Activated CD4-positive, alpha-beta memory T cell treated with anti-CD3 and anti-CD28 coated beads for 36 hours (primary cell): ENCODE measurements at regions of chr2 and their contacts with region 1.

Region 1: GRCh38 chr2:170361090-170361936 is 183.4 kb downstream of the MYO3B start:
- DNase-seq: peak; percentile 71
- H3K4me3 Mint-ChIP-seq: no peak overlapping the region
- H3K27ac Mint-ChIP-seq: no peak overlapping the region
- H3K4me1 Mint-ChIP-seq: peaks cover 25% of the 10 kb centered on the region
- H3K27me3 Mint-ChIP-seq: peaks cover 22% of the 10 kb centered on the region

Region 2: DNA sequence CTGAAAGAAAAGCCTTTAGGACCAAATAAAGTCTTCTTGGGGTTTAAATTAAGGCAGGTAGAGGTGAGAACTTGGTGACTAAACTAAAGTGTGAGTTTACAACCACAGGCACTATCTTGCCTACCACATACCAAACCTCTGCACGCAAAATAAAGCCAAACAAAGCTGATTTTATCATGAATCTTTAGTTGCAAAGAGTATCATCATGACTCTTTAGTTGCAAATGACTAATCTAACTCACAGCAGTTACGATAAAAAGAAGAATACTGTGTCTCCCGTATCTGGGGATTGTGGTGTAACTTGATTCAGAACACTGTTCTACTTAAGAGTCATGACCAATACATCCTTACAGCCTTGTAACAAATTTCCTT is 678.3 kb before region 1 on chr2:
- CTCF ChIA-PET with region 1: no interaction called
- POLR2A ChIA-PET with region 1: no interaction called
- intact Hi-C with region 1: loop called (anchors 10 kb)
- DNase-seq: peak; percentile 46
- H3K4me3 Mint-ChIP-seq: no peak overlapping the region
- H3K27ac Mint-ChIP-seq: peak overlapping the region; percentile 57
- H3K4me1 Mint-ChIP-seq: peaks cover 13% of the 10 kb centered on the region
- H3K27me3 Mint-ChIP-seq: no peaks in the 10 kb centered on the region

Region 3: GRCh38 chr2:170255971-170256370 is 105.3 kb before region 1 on chr2:
- CTCF ChIA-PET with region 1: no interaction called
- POLR2A ChIA-PET with region 1: no interaction called
- intact Hi-C with region 1: no loop called
- DNase-seq: no peak
- H3K4me3 Mint-ChIP-seq: no peak overlapping the region
- H3K27ac Mint-ChIP-seq: no peak overlapping the region
- H3K4me1 Mint-ChIP-seq: no peaks in the 10 kb centered on the region
- H3K27me3 Mint-ChIP-seq: peaks cover 16% of the 10 kb centered on the region

Region 4: DNA sequence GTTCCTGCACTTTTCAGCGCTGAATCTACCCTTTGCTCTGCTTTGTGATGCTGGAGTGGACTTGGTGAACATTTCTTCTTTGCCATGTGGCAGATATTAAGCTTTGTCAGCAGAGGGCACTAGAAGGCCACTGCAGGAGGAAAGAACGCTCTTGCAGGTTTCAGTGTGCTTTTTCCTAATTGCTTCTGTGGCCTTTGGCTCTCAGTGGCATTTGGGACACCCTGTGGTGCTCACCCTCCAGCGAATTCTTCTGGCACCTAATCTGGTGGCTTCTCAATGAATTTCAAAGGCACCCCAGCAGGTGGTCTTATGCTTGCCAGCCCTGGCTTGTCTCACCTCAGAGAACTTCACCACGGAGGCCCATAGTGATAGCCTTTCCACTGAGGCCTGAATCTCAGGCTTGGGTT is 36.7 kb before region 1 on chr2:
- CTCF ChIA-PET with region 1: interaction called, 23 read pairs
- POLR2A ChIA-PET with region 1: no interaction called
- intact Hi-C with region 1: no loop called
- DNase-seq: peak; percentile 41
- H3K4me3 Mint-ChIP-seq: no peak overlapping the region
- H3K27ac Mint-ChIP-seq: no peak overlapping the region
- H3K4me1 Mint-ChIP-seq: no peaks in the 10 kb centered on the region
- H3K27me3 Mint-ChIP-seq: peaks cover 7% of the 10 kb centered on the region

Region 5: DNA sequence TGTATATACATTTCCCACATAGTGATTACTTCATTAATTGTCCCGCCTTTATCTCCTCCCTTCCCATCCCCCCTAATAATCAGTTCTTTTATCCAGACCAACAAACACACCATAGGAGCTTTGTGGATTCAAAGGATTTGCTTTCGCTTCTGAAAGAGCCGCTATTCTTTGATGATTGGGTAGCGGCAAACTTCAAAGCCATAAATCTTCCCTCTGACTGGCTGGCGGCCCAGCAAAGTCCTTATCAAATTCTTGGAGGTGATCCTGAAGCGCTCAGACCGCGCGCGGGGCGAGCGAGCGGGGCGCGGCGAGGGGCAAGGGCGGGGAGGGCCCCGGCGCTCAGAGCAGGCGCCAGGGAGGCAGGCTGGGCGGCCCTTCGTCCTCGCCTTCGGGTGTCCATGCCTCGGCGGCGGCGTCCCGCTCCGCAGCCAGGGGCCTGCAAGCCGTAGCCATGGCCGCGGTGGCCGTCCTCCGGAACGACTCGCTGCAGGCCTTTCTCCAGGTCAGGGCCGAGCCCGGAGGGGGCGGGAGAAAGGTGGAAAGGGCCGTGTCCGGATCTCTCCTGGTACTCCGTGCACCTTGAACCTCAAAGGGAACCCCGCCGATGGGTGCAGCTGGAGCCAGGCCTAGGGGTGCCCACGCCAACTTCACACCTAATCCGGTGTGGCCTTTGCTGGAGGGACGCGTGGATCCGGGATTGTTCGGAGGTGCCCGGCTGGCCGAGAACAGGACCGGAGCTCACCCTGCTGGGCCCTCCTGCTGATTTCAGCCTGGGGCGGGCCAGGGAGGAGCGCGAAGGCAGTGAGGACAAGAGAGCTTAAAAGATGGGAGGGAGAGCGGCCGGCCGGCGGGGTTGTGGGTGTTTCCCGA is 354.0 kb after region 1 on chr2 and contains the start of gene SP5:
- CTCF ChIA-PET with region 1: interaction called, 4 read pairs
- POLR2A ChIA-PET with region 1: no interaction called
- intact Hi-C with region 1: loop called (anchors 10 kb)
- DNase-seq: peak; percentile 40
- H3K4me3 Mint-ChIP-seq: peak within 1 kb of the TSS; percentile 69
- H3K27ac Mint-ChIP-seq: no peak within 1 kb of the TSS
- H3K4me1 Mint-ChIP-seq: peaks cover 37% of the 10 kb centered on the region
- H3K27me3 Mint-ChIP-seq: peaks cover 68% of the 10 kb centered on the region
- total RNA-seq, gene SP5: not detected

Region 6: DNA sequence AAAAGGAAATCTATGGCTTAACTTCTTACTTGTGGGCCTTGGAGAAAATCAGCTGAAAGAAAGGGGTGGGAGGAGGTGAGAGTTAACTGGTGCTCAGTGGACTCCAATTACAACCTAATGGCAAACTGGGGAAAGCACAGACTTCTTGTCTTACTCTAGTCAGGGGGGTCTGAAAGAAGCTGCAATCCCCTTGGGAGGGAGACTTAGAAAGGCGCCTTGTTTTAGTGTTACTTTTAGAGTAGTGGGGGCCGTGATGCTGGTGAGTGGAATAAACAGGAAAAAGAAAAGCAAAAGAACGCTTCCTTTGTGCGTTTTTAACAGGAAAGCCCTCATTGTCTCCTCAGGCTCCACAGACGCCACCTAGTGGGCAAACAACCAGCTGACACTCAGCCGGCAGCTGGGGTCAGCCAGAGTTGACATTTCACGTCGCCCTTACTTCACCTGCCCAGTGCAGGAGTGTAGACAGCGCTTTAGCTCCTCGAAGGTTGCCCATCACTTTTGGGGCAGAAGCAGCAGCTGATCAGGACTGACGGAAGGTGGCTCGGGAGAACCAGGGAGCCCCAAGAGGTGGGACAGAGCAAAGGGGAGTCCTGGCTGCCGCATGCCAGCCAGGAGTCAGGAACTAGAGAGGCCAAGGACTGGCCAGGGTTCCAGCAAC is 511.9 kb after region 1 on chr2:
- CTCF ChIA-PET with region 1: interaction called, 14 read pairs
- POLR2A ChIA-PET with region 1: no interaction called
- intact Hi-C with region 1: no loop called
- DNase-seq: peak; percentile 85
- H3K4me3 Mint-ChIP-seq: peak overlapping the region; percentile 44
- H3K27ac Mint-ChIP-seq: no peak overlapping the region
- H3K4me1 Mint-ChIP-seq: peaks cover 11% of the 10 kb centered on the region
- H3K27me3 Mint-ChIP-seq: no peaks in the 10 kb centered on the region